ENCODE measurements at regions of chr9 and their contacts with region 1.

Region 1: DNA sequence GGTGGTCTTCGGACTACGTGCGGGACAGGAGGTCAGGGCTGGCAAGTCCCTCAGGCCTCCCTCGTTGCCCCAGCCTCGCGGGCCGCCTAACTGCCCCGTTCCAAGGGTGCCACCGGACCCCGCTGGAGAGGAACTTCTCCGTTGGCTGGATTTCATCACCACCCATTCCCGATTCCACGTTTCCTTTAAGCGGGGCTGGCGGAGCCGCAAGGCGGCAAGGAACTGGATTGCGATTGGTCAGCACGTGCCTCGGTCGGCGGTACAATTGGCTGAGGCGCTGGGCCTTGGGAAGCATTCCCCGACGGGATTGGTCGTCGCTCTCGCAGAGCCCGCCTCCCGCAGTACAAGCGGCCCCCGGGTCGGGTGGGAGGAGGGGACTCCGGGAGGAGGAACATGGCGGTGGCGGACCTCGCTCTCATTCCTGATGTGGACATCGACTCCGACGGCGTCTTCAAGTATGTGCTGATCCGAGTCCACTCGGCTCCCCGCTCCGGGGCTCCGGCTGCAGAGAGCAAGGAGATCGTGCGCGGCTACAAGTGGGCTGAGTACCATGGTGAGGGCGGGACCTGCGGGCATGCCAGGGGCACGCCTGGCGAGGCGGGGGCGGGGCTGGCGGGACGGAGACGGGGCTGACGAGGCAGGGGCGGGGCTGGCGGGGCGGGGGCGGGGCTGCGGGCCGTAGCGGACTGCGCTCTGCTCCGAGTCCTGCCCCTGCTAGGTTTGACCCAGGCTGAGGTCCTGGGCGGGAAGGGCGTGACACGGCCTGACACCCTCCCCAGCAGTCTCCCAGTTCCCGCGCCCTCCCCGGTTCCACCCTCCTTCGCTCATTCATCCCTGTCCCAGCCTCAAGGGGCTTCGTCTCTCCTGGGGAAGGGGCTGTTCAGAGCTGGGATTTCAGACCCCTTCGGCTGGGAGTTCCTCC is at the start of gene PHPT1:
- DNase-seq: peak; percentile 96 to 99
- H3K4me3 ChIP-seq: peak within 1 kb of the TSS; percentile 87
- H3K27ac ChIP-seq: peak within 1 kb of the TSS; percentile 80
- H3K4me1 ChIP-seq: peaks cover 6% of the 10 kb centered on the region; the same call in 1 of the 2 replicates
- H3K27me3 ChIP-seq: no peaks in the 10 kb centered on the region
- CTCF ChIP-seq: no peak
- total RNA-seq, gene PHPT1: 112 and 114 TPM in 2 replicates

Region 2: DNA sequence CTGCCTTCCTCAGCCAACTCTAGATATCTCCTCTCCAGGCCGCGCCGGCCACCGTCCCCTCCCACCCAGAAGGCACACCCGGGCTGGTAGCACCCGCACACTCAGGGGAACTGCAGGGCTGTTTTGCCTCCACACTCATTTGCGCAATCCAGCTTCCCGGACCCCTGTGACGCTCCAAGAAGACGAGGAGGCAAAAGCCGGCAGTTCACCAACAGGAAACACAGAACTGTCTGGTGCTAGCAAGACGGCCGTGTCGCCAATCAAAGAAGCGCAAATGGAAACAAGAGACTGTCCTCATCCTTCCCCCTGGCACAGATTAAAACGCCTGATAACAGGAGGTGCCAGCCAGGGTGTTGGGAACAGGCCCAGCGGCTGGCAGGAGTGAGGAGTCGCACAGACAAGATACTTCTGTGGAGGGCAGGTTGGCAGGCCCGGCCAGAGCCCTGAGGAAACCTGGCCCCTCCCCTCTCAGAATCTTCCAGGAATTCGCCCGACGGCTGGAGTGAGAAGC is 169.8 kb before region 1 on chr9:
- CTCF ChIA-PET with region 1: no interaction called
- POLR2A ChIA-PET with region 1: no interaction called
- intact Hi-C with region 1: no loop called
- DNase-seq: no peak
- H3K4me3 ChIP-seq: no peak overlapping the region
- H3K27ac ChIP-seq: no peak overlapping the region
- H3K4me1 ChIP-seq: no peaks in the 10 kb centered on the region
- H3K27me3 ChIP-seq: no peaks in the 10 kb centered on the region
- CTCF ChIP-seq: no peak

Region 3: DNA sequence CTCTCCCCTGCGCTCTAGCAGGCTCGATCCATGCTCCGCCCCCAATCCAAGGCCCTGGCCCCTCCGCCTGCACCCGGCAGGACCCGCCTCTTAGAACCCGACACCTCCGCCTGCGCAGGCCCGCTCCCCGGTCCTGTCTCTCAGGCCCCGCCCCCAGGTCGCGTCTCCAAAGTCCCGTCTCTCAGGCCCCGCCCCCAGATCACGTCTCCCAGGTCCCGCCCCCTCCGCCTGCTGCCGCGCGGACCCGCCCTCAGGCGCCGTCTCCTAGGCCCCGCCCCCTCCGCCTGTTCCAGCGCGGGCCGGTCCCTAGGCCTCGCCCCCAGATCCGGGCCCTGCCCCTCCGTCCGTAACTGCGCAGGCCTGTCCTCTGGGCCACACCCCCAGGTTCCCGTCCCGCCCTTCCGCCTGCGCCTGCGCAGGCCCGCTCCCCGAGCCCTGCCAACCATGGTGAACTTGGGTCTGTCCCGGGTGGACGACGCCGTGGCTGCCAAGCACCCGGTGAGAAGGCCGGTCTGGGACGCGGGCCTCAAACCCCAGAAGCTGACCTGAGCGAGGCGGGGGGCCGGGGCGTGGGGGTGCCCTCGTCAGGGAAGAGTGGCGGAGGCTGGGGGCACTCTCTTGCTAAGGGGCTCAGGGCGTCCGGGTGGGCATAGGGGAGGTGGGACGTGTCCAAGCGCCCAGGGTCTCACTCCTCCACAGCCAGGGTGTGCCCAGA is 58.2 kb before region 1 on chr9 and contains the start of gene TMEM141:
- CTCF ChIA-PET with region 1: no interaction called
- POLR2A ChIA-PET with region 1: interaction called, 5 read pairs
- intact Hi-C with region 1: loop called (anchors 1 kb)
- DNase-seq: peak; percentile 94 to 100
- H3K4me3 ChIP-seq: peak within 1 kb of the TSS; percentile 68
- H3K27ac ChIP-seq: peak within 1 kb of the TSS; percentile 79
- H3K4me1 ChIP-seq: peaks cover 15% of the 10 kb centered on the region; the same call in 1 of the 2 replicates
- H3K27me3 ChIP-seq: no peaks in the 10 kb centered on the region
- CTCF ChIP-seq: no peak
- total RNA-seq, gene TMEM141: 83.6 and 124 TPM in 2 replicates

Region 4: DNA sequence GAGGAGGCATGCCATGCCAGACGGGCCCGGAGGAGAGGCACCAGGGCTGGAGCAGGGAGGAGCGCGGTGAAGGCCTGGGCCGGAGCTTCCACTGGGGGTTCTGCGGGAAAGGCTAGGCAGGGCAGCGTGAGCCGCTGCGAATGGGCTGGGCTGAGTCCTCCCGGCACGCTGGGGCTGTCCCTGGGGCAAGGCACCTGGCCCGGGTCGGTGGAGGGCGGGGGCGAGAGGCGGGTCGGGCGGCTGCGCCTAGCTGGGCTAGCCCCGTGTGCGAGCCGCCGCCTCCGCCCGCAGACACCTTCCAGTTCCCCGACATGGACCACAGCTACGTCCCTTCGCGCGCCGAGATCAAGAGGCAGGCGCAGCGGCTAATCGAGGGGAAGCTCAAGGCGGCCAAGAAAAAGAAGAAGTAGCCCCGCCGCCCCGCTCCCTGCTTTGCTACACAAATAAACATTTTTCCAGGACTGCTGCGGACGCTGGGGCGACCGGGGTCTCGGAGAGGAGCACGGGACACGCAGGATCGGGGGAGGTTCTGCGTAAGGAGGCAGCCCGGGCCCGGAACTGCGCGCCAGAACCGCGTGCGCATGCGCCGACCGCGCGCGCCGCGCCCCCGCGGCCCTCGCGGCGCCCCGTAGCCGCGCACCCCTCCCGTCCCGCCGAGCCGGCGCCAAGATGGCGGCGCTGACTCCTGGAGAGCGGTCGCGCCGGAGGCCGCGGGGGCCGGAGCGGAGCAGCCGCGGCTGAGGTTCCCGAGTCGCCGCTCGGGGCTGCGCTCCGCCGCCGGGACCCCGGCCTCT is 41.8 kb before region 1 on chr9 and contains the start of gene RABL6:
- CTCF ChIA-PET with region 1: no interaction called
- POLR2A ChIA-PET with region 1: interaction called, 16 read pairs
- intact Hi-C with region 1: no loop called
- DNase-seq: peak in 1 of 2 experiments; percentile 84
- H3K4me3 ChIP-seq: peak within 1 kb of the TSS; percentile 96
- H3K27ac ChIP-seq: 0 out of 2 replicates have a peak within 1 kb of the TSS, but pooled peaks have one; percentile 19
- H3K4me1 ChIP-seq: peaks cover 19% of the 10 kb centered on the region
- H3K27me3 ChIP-seq: no peaks in the 10 kb centered on the region
- CTCF ChIP-seq: no peak
- total RNA-seq, gene RABL6: 116 and 136 TPM in 2 replicates

Region 5: DNA sequence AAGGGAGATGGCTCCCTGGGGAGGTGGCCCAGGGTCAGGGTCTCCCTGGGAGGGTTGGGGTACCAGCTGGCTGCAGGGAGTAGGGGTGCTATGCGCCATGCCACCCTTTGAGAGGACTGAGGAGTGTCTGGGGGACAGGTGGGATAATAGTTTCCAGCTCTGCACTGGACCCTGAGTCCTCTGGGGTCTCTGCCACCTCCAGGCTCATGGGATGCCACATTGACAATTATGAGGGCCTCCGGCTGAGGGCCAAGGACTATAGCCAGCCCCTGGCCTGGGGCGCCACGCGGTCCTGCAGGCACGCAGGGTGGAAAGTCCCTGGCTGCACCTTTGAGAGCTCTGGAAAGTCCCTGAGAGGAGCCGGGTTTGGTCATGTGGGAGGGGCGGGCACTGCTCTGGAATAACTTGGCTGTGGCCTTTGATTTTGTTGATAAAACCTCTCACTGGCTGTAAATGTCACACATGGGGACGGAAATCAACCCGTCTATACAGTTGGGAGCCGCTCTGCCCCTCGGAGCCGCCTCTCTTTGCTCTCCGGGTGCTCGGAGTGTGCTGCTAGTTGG is 53.0 kb after region 1 on chr9:
- CTCF ChIA-PET with region 1: no interaction called
- POLR2A ChIA-PET with region 1: interaction called, 27 read pairs
- intact Hi-C with region 1: loop called (anchors 1 kb)
- DNase-seq: peak; percentile 84 to 87
- H3K4me3 ChIP-seq: peak overlapping the region; percentile 44; the same call in 1 of the 2 replicates
- H3K27ac ChIP-seq: peak overlapping the region; percentile 99
- H3K4me1 ChIP-seq: peaks cover 44% of the 10 kb centered on the region
- H3K27me3 ChIP-seq: no peaks in the 10 kb centered on the region
- CTCF ChIP-seq: no peak; the same call in 1 of the 2 replicates

Region 6: GRCh38 chr9:136925414-136926136 is 76.3 kb after region 1 on chr9:
- CTCF ChIA-PET with region 1: no interaction called
- POLR2A ChIA-PET with region 1: no interaction called
- intact Hi-C with region 1: no loop called
- DNase-seq: no peak
- H3K4me3 ChIP-seq: no peak overlapping the region
- H3K27ac ChIP-seq: no peak overlapping the region
- H3K4me1 ChIP-seq: no peaks in the 10 kb centered on the region
- H3K27me3 ChIP-seq: no peaks in the 10 kb centered on the region
- CTCF ChIP-seq: no peak

Region 7: DNA sequence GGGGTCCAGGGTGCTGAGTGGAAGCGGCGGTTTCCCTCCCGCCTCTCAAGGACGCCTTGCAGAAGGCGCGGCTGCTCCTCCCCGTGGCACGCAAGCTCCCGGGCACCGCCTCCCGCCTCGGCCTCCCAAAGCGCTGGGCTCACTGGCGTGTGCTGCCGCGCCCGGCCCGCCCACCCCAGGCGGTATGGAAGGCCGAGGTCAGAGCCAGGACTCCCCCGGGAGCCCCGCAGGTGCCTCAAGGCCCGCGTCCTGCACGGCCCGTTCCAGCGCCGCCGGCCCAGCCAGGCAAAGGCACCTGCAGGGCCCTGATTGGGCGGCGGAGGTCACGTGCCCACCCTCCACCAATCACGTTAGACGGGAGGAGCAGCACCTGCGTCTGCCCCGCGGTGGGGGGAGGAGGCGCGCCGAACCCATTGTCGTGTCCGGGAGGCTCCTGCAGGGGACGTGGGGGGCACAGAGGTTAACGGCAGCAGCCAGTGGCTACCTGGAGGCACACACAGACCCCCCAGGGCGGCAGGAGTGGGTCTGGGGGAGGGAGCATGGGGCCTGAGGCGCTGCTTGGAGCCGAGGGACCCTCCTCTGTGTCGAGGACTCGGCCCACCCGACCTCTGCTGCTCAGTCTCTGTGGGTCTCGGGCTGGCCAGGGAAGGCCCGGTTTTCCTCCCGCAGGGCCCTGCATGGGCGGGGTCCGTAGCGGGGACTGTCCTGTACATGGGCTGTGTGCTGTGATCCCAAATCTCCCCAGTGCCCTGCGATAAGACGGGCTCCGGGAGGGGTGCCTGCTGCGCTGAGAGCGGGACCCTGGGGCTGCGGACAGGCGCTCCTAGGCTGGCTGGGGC is 100.7 kb after region 1 on chr9:
- CTCF ChIA-PET with region 1: interaction called, 9 read pairs
- POLR2A ChIA-PET with region 1: no interaction called
- intact Hi-C with region 1: loop called (anchors 1 kb)
- DNase-seq: peak; percentile 86 to 99
- H3K4me3 ChIP-seq: peak overlapping the region; percentile 77
- H3K27ac ChIP-seq: peak overlapping the region; percentile 68
- H3K4me1 ChIP-seq: peaks cover 20% of the 10 kb centered on the region
- H3K27me3 ChIP-seq: no peaks in the 10 kb centered on the region
- CTCF ChIP-seq: no peak; the same call in 1 of the 2 replicates

Region 8: GRCh38 chr9:137000177-137000883 is 151.0 kb after region 1 on chr9:
- CTCF ChIA-PET with region 1: no interaction called
- POLR2A ChIA-PET with region 1: interaction called, 10 read pairs
- intact Hi-C with region 1: loop called (anchors 5 kb)
- DNase-seq: no peak
- H3K4me3 ChIP-seq: no peak overlapping the region
- H3K27ac ChIP-seq: no peak overlapping the region
- H3K4me1 ChIP-seq: peaks cover 30% of the 10 kb centered on the region
- H3K27me3 ChIP-seq: no peaks in the 10 kb centered on the region
- CTCF ChIP-seq: no peak

Region 9: GRCh38 chr9:137034863-137035761 is 185.8 kb after region 1 on chr9:
- CTCF ChIA-PET with region 1: interaction called, 7 read pairs
- POLR2A ChIA-PET with region 1: interaction called, 10 read pairs
- intact Hi-C with region 1: no loop called
- DNase-seq: peak; percentile 70 to 88
- H3K4me3 ChIP-seq: peak overlapping the region; percentile 29; the same call in 1 of the 2 replicates
- H3K27ac ChIP-seq: no peak overlapping the region
- H3K4me1 ChIP-seq: peaks cover 9% of the 10 kb centered on the region
- H3K27me3 ChIP-seq: no peaks in the 10 kb centered on the region
- CTCF ChIP-seq: peak; percentile 87

Measured in PC-9 (cell line).